OCI-LY7 (cell line): ENCODE measurements at regions of chr4 and their contacts with region 1.

Region 1: GRCh38 chr4:112118742-112119352 is 26.4 kb upstream of the FAM241A start:
- DNase-seq: no peak
- H3K4me3 ChIP-seq: no peak overlapping the region
- H3K27ac ChIP-seq: no peak overlapping the region
- H3K4me1 ChIP-seq: no peaks in the 10 kb centered on the region
- CTCF ChIP-seq: no peak

Region 2: GRCh38 chr4:110540982-110541440 is 1577.8 kb before region 1 on chr4:
- CTCF ChIA-PET with region 1: interaction called, 15 read pairs
- POLR2A ChIA-PET with region 1: no interaction called
- intact Hi-C with region 1: no loop called
- DNase-seq: no peak
- H3K4me3 ChIP-seq: no peak overlapping the region
- H3K27ac ChIP-seq: no peak overlapping the region
- H3K4me1 ChIP-seq: no peaks in the 10 kb centered on the region
- CTCF ChIP-seq: no peak

Region 3: GRCh38 chr4:110945600-110945999 is 1173.2 kb before region 1 on chr4:
- CTCF ChIA-PET with region 1: no interaction called
- POLR2A ChIA-PET with region 1: no interaction called
- intact Hi-C with region 1: no loop called
- DNase-seq: no peak
- H3K4me3 ChIP-seq: no peak overlapping the region
- H3K27ac ChIP-seq: no peak overlapping the region
- H3K4me1 ChIP-seq: no peaks in the 10 kb centered on the region
- CTCF ChIP-seq: no peak